Brain microvascular endothelial cell (primary cell): ENCODE measurements at regions of chr5 and their contacts with region 1.

Region 1: GRCh38 chr5:31809050-31809870 is 170.3 kb downstream of the PDZD2 start:
- DNase-seq: peak; percentile 74
- H3K4me3 ChIP-seq: no peak overlapping the region
- H3K27ac ChIP-seq: no peak overlapping the region
- H3K27me3 ChIP-seq: peaks cover 10% of the 10 kb centered on the region
- CTCF ChIP-seq: peak; percentile 88

Region 2: DNA sequence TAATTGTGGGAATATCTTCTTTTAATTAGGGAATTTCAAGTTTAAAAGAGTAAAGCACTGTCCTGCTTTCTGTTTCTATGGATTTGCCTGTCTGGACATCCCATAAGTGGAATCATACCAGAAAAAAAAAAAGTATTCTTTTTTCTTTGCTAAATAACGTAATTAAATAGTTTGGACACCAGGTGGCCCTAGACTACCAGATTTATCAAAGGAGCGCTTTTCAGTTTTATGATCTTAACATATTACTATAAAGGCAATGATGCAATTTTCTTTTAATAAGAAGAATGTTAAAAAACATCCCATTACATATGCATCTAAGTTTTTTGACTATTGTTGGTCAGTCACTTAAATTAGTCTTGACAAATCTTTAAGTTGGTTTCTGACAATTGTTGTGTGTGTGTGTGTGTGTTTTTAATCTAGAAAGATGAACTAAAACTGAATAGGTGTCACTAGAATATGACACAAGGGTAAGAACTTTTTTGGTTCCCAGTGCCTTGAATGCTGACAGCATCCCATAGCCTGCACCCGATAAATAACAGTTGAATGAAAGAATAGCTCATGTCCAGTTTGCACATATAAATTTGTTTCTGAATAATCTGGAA is 227.7 kb before region 1 on chr5:
- in situ Hi-C with region 1: loop called (anchors 25 kb)
- DNase-seq: no peak
- H3K4me3 ChIP-seq: no peak overlapping the region
- H3K27ac ChIP-seq: no peak overlapping the region
- H3K27me3 ChIP-seq: no peaks in the 10 kb centered on the region
- CTCF ChIP-seq: peak; percentile 18